ENCODE measurements at regions of chr12 and their contacts with region 1.

Region 1: DNA sequence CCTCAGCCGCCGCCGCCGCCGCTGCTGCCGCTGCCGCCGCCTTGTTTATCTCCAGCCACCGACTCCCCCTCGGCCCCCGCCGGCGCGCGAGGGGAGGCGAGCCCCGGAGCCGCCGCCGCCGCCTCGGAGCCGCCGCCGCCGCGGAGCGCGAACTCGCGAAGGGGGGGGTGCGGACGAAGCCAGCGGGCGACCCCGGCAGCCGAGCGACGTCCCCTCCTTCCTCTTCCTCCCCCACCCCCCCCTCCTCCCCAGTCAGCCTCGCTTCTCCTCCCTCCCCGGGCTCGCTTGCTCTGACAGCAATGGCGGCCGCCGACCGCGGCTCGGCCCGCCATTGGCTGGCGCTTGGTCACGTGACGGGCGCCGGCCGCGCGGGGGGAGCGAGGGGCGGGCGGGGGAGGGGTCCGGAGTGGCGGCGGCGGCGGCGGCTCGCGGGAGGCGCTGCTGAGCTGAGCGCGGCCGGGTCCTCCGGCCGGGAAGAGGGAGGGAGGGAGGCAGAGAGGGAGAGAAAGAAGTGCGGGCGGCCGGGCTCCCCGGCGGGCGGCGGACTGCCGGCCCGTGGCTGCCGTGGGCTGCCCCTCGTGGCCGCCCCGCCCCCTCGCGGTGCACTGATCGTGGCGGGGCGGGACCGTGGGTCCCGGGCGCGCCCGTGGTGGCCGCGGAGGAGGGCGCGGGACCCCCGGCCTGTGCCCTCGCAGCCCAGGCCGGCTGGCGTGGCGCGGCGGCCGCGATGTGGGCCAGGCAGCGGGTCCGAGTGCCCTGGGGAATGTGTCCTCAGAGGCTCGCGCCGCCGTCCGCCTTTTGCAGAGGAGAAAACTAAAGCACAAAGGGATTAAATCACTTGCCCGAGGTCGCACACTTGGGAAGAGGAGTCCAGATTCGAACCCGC is at the start of gene MED13L:
- DNase-seq: peak; percentile 94
- ATAC-seq: peak; percentile 78
- H3K4me3 ChIP-seq: peak within 1 kb of the TSS; percentile 75 to 91 (median 84)
- H3K4me3 Mint-ChIP-seq: peak within 1 kb of the TSS; percentile 98
- H3K27ac ChIP-seq: peak within 1 kb of the TSS; percentile 22 to 71
- H3K27ac Mint-ChIP-seq: peak within 1 kb of the TSS; percentile 93
- H3K4me1 ChIP-seq: peaks cover 25 to 40% of the 10 kb centered on the region in 2 donors
- H3K4me1 Mint-ChIP-seq: peaks cover 39% of the 10 kb centered on the region
- H3K27me3 ChIP-seq: no peaks in the 10 kb centered on the region
- H3K27me3 Mint-ChIP-seq: no peaks in the 10 kb centered on the region
- CTCF ChIP-seq: peak; percentile 26
- total RNA-seq, gene MED13L: 207 TPM in 2 replicates

Region 2: GRCh38 chr12:116066381-116067230 is 211.0 kb before region 1 on chr12:
- CTCF ChIA-PET with region 1: no interaction called
- POLR2A ChIA-PET with region 1: no interaction called
- intact Hi-C with region 1: loop called (anchors 1 kb)
- DNase-seq: peak; percentile 73
- ATAC-seq: peak; percentile 74
- H3K4me3 ChIP-seq: no peak overlapping the region
- H3K4me3 Mint-ChIP-seq: no peak overlapping the region
- H3K27ac ChIP-seq: no peak overlapping the region
- H3K27ac Mint-ChIP-seq: peak overlapping the region; percentile 21
- H3K4me1 ChIP-seq: peaks cover 8% of the 10 kb centered on the region in 2 donors
- H3K4me1 Mint-ChIP-seq: peaks cover 42% of the 10 kb centered on the region
- H3K27me3 ChIP-seq: no peaks in the 10 kb centered on the region
- H3K27me3 Mint-ChIP-seq: no peaks in the 10 kb centered on the region
- CTCF ChIP-seq: peak; percentile 97

Region 3: DNA sequence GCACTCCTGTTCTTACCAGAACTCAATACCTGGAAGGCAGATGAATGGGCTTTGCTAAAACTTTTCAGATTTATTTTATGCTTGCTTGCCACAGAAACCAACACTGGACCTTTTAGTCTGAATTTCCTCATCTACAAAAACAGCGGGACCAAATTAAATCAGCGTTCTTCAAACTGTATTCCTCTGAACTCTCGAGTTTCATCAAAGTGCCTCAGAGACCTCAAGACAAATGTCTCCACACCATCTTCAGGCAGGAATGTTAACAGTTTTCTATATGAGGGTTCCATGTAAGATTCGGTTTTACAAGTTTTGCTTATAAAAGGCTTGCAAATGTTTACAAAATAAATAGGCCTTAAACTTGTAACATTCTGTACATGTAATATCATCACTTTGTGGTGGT is 74.7 kb before region 1 on chr12:
- CTCF ChIA-PET with region 1: no interaction called
- POLR2A ChIA-PET with region 1: no interaction called
- intact Hi-C with region 1: no loop called
- DNase-seq: no peak
- ATAC-seq: no peak
- H3K4me3 ChIP-seq: no peak overlapping the region
- H3K4me3 Mint-ChIP-seq: no peak overlapping the region
- H3K27ac ChIP-seq: no peak overlapping the region
- H3K27ac Mint-ChIP-seq: peak overlapping the region; percentile 44
- H3K4me1 ChIP-seq: peaks cover 5 to 11% of the 10 kb centered on the region in 2 donors
- H3K4me1 Mint-ChIP-seq: peaks cover 59% of the 10 kb centered on the region
- H3K27me3 ChIP-seq: no peaks in the 10 kb centered on the region
- H3K27me3 Mint-ChIP-seq: no peaks in the 10 kb centered on the region
- CTCF ChIP-seq: no peak

Region 4: GRCh38 chr12:116244001-116244400 is 33.6 kb before region 1 on chr12:
- CTCF ChIA-PET with region 1: interaction called, 10 read pairs
- POLR2A ChIA-PET with region 1: no interaction called
- intact Hi-C with region 1: loop called (anchors 5 kb)
- DNase-seq: peak; percentile 54
- ATAC-seq: peak; percentile 67
- H3K4me3 ChIP-seq: no peak overlapping the region
- H3K4me3 Mint-ChIP-seq: peak overlapping the region; percentile 24
- H3K27ac ChIP-seq: peak overlapping the region; percentile 17 to 54
- H3K27ac Mint-ChIP-seq: peak overlapping the region; percentile 34
- H3K4me1 ChIP-seq: peaks cover 40 to 55% of the 10 kb centered on the region in 2 donors
- H3K4me1 Mint-ChIP-seq: peaks cover 76% of the 10 kb centered on the region
- H3K27me3 ChIP-seq: no peaks in the 10 kb centered on the region
- H3K27me3 Mint-ChIP-seq: no peaks in the 10 kb centered on the region
- CTCF ChIP-seq: no peak

Region 5: GRCh38 chr12:116288735-116289134 is 11.1 kb after region 1 on chr12:
- CTCF ChIA-PET with region 1: no interaction called
- POLR2A ChIA-PET with region 1: no interaction called
- intact Hi-C with region 1: no loop called
- DNase-seq: no peak
- ATAC-seq: no peak
- H3K4me3 ChIP-seq: no peak overlapping the region
- H3K4me3 Mint-ChIP-seq: no peak overlapping the region
- H3K27ac ChIP-seq: no peak overlapping the region
- H3K27ac Mint-ChIP-seq: no peak overlapping the region
- H3K4me1 ChIP-seq: no peaks in the 10 kb centered on the region
- H3K4me1 Mint-ChIP-seq: no peaks in the 10 kb centered on the region
- H3K27me3 ChIP-seq: no peaks in the 10 kb centered on the region
- H3K27me3 Mint-ChIP-seq: no peaks in the 10 kb centered on the region
- CTCF ChIP-seq: no peak

Region 6: DNA sequence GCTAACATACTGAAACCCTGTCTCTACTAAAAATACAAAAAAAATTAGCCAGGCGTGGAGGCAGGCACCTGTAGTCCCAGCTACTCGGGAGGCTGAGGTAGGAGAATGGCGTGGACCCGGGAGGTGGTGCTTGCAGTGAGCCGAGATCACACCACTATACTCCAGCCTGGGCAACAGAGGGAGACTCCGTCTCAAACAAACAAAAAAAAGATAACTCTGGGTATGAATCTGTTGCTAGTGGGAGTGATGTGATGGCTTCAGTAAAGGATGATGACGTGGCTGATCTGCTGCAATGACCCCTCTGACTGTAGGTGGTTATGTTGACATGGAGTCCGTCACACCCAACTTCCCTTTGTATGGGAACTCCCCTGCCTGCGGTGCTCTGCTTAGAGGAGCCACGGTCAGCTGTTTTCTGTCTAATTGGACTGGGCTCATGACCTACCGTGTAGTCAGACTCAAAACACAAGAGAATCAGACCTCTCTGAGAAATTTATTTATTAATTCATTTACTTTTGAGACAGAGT is 59.0 kb after region 1 on chr12:
- CTCF ChIA-PET with region 1: interaction called, 4 read pairs
- POLR2A ChIA-PET with region 1: interaction called, 11 read pairs
- intact Hi-C with region 1: loop called (anchors 2 kb)
- DNase-seq: peak; percentile 94
- ATAC-seq: peak; percentile 90
- H3K4me3 ChIP-seq: peak overlapping the region in 2 of 5 experiments; percentile 18 to 35
- H3K4me3 Mint-ChIP-seq: peak overlapping the region; percentile 78
- H3K27ac ChIP-seq: peak overlapping the region; percentile 55 to 78
- H3K27ac Mint-ChIP-seq: peak overlapping the region; percentile 89
- H3K4me1 ChIP-seq: peaks cover 56 to 84% of the 10 kb centered on the region in 2 donors
- H3K4me1 Mint-ChIP-seq: peaks cover 70% of the 10 kb centered on the region
- H3K27me3 ChIP-seq: no peaks in the 10 kb centered on the region
- H3K27me3 Mint-ChIP-seq: no peaks in the 10 kb centered on the region
- CTCF ChIP-seq: peak; percentile 15

Region 7: DNA sequence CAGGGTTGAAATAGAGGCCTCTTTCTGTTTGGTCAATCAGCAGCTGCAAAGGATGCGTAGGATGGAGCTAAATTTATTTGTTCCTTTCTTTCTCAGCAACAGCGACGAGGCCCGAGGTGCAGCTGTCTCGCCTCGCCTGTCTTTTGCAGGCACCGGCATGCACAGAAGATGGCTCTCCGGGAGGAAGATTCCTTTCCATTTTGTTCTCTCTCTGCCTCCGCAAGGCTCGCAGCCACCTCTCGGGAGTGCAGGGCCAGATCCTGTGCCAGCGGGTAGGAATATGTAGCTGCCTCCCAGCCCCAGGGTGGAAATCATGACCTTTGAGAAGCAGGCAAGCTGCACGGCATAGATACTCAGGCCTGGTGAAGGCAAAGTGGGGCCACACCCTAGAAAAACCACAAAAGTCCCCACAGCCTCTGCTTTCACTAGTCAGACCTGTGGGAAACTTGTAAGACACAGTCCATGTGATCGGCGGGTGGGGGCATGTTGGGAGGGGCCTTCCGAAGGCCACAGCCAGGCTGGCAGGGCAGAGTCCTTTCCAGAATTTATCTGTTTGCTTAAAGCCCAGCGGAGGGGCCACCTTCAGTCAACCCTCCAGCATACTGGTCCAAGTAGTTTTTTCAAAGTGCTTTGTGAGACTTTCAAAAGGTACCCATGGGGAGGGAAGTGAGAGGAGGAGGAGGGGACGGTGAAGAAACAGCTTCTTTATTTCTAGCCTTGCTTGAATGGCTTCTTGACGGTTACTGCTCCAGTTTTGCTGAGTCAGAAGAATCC is 281.7 kb after region 1 on chr12 and contains the start of gene MAP1LC3B2:
- CTCF ChIA-PET with region 1: interaction called, 10 read pairs
- POLR2A ChIA-PET with region 1: interaction called, 23 read pairs
- intact Hi-C with region 1: loop called (anchors 1 kb)
- DNase-seq: peak; percentile 96
- ATAC-seq: peak; percentile 79
- H3K4me3 ChIP-seq: peak within 1 kb of the TSS; percentile 38 to 67 (median 45)
- H3K4me3 Mint-ChIP-seq: peak within 1 kb of the TSS; percentile 91
- H3K27ac ChIP-seq: peak within 1 kb of the TSS; percentile 95 to 99
- H3K27ac Mint-ChIP-seq: peak within 1 kb of the TSS; percentile 100
- H3K4me1 ChIP-seq: peaks cover 42 to 54% of the 10 kb centered on the region in 2 donors
- H3K4me1 Mint-ChIP-seq: peaks cover 48% of the 10 kb centered on the region
- H3K27me3 ChIP-seq: no peaks in the 10 kb centered on the region
- H3K27me3 Mint-ChIP-seq: no peaks in the 10 kb centered on the region
- CTCF ChIP-seq: no peak
- total RNA-seq, gene MAP1LC3B2: 1.0 TPM in 1 of 2 replicates, not detected in the other

Region 8: DNA sequence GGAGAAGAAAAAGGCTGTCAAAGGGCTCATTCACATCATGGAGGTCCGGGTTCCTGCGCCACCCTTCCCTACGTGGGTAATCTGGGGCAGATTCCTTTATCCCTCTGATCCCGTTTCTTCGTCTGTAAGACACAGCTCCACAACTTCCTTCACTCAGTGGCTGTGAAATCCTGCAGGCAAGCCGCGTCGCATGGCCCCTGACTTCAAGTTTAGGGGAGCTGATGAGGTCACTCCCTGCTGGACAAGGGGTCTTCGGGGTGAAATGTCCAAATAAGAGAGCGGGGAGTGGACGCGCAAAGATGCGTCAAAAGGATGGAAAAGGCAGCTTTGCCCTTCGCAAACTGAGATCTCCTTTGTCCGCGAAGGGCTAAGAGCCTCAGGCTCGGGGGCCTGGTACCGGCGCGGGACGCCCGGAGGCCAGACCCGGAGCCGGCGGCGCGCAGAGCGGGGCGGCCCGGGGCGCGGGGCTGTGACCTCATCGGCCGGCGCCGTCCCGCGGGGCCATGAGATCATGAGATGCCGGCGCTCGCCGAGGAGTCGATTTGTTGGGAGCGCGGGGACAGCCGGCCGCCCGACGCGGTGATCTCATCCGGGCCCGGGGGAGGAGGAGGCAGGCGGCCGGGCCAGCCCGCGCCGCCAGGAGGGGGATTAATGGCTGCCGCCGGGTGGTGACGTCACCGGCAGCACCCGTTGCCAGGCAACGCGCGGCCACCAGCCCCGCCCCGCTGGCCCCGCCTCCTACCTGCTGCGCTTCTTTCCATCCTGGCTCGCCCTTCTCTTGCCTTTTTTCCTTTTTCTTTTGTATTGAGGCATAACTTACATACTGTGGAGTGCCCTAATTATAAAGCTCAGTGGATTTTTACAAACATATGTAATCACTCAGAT is 541.6 kb after region 1 on chr12:
- CTCF ChIA-PET with region 1: no interaction called
- POLR2A ChIA-PET with region 1: no interaction called
- intact Hi-C with region 1: loop called (anchors 2 kb)
- DNase-seq: peak; percentile 95
- ATAC-seq: peak; percentile 84
- H3K4me3 ChIP-seq: peak overlapping the region; percentile 82 to 96 (median 95)
- H3K4me3 Mint-ChIP-seq: peak overlapping the region; percentile 87
- H3K27ac ChIP-seq: peak overlapping the region; percentile 93 to 94
- H3K27ac Mint-ChIP-seq: peak overlapping the region; percentile 93
- H3K4me1 ChIP-seq: peaks cover 47 to 49% of the 10 kb centered on the region in 2 donors
- H3K4me1 Mint-ChIP-seq: peaks cover 59% of the 10 kb centered on the region
- H3K27me3 ChIP-seq: no peaks in the 10 kb centered on the region
- H3K27me3 Mint-ChIP-seq: no peaks in the 10 kb centered on the region
- CTCF ChIP-seq: no peak

Region 9: GRCh38 chr12:116910645-116911451 is 633.2 kb after region 1 on chr12 and contains the start of gene FBXW8:
- CTCF ChIA-PET with region 1: no interaction called
- POLR2A ChIA-PET with region 1: no interaction called
- intact Hi-C with region 1: no loop called
- DNase-seq: peak; percentile 70
- ATAC-seq: peak; percentile 96
- H3K4me3 ChIP-seq: peak within 1 kb of the TSS; percentile 46 to 89 (median 70)
- H3K4me3 Mint-ChIP-seq: peak within 1 kb of the TSS; percentile 90
- H3K27ac ChIP-seq: peak within 1 kb of the TSS in 1 of 2 donors; percentile 59
- H3K27ac Mint-ChIP-seq: peak within 1 kb of the TSS; percentile 75
- H3K4me1 ChIP-seq: peaks cover 14% of the 10 kb centered on the region in 2 donors
- H3K4me1 Mint-ChIP-seq: peaks cover 33% of the 10 kb centered on the region
- H3K27me3 ChIP-seq: peaks cover 0 to 3% (median 0%) of the 10 kb centered on the region in 4 experiments
- H3K27me3 Mint-ChIP-seq: peaks cover 2% of the 10 kb centered on the region
- CTCF ChIP-seq: no peak
- total RNA-seq, gene FBXW8: 23.5 and 23.9 TPM in 2 replicates